IMR-90 (cell line): ENCODE measurements at regions of chr2 and their contacts with region 1.

Region 1: DNA sequence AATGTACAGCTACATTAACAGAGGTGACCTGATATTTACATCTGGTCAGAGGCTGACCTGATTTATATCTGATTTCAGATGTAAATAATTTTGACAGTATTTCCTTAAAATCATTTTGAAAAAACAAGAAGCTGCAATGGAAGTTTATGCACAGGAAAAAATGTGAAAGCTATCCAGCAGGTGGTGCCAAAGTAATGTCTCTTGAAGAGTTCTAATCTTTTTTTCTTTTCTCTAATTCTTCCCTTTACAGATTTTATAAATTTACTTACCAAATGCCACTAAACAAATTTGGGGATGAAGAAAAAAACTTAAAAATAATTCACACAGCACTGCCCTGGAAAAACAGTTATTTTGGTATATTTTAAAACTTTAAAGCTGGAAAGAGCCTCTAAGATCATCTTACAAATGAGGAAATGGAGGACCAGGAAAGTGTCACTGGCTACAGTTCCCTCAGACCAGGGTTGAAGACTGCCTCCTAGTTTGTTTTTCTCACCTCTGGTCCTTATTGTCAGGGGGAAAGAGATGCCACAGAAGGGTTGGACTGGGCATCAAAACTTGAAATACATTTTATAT is 16.4 kb upstream of the FBLN7 start:
- DNase-seq: peak; percentile 66
- ATAC-seq: no peak
- H3K4me3 ChIP-seq: no peak overlapping the region
- H3K27ac ChIP-seq: no peak overlapping the region
- H3K4me1 ChIP-seq: no peaks in the 10 kb centered on the region
- H3K27me3 ChIP-seq: no peaks in the 10 kb centered on the region
- CTCF ChIP-seq: peak; percentile 71
- POLR2A ChIP-seq: no peak
- RAD21 ChIP-seq: peak; percentile 74

Region 2: GRCh38 chr2:111883661-111884591 is 237.8 kb before region 1 on chr2 and contains the start of gene ANAPC1:
- CTCF ChIA-PET with region 1: no interaction called
- POLR2A ChIA-PET with region 1: no interaction called
- dilution Hi-C with region 1: no loop called
- in situ Hi-C with region 1: no loop called
- intact Hi-C with region 1: no loop called
- DNase-seq: peak; percentile 69
- ATAC-seq: peak; percentile 99
- H3K4me3 ChIP-seq: peak within 1 kb of the TSS; percentile 61
- H3K27ac ChIP-seq: peak within 1 kb of the TSS; percentile 60
- H3K4me1 ChIP-seq: no peaks in the 10 kb centered on the region
- H3K27me3 ChIP-seq: no peaks in the 10 kb centered on the region
- CTCF ChIP-seq: no peak
- POLR2A ChIP-seq: peak; percentile 79; the same call in 1 of the 2 replicates
- RAD21 ChIP-seq: no peak
- total RNA-seq, gene ANAPC1: 50.7 and 70.0 TPM in 2 replicates

Region 3: GRCh38 chr2:112242384-112242783 is 120.6 kb after region 1 on chr2:
- CTCF ChIA-PET with region 1: interaction called, 3 read pairs
- POLR2A ChIA-PET with region 1: no interaction called
- dilution Hi-C with region 1: no loop called
- in situ Hi-C with region 1: no loop called
- intact Hi-C with region 1: loop called (anchors 10 kb)
- DNase-seq: no peak
- ATAC-seq: no peak
- H3K4me3 ChIP-seq: no peak overlapping the region
- H3K27ac ChIP-seq: no peak overlapping the region
- H3K4me1 ChIP-seq: no peaks in the 10 kb centered on the region
- H3K27me3 ChIP-seq: no peaks in the 10 kb centered on the region
- CTCF ChIP-seq: no peak
- POLR2A ChIP-seq: no peak
- RAD21 ChIP-seq: no peak

Region 4: DNA sequence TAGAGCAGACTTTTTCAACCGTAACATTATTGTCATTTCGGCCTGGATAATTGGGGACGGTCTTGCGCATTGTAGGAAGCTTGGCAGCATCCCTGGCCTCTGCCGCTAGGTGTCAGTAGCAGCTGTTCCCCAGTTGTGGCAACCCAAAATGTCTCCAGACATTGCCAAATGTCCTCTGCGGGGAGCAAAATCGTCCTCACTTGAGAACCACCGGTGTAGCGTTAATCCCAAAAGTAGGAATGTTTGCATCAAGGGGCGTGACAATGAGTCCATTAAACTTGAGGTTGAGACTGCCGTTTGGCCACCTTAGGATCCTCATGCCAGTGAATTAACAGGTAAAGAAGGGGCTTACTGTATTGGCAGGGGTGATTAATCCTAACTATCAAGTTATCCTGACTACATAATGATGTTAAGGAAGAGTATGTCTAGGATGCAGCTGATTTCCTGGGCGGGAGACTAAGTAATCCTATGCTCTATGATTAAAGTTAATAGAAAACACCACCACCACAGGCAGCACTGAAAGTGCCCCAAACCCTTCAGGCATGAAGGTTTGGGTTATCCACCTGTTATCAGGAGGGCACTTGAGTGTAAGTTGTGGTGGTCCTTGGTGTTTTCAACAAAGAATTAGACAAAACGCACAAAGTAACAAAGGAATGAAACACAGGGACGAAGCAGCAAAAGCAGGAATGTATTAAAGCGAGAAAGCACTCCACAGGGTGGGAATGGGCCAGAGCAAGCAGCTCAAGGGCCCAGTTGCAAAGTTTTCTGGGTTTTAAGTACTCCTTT is 137.9 kb after region 1 on chr2:
- CTCF ChIA-PET with region 1: interaction called, 3 read pairs
- POLR2A ChIA-PET with region 1: no interaction called
- dilution Hi-C with region 1: no loop called
- in situ Hi-C with region 1: no loop called
- intact Hi-C with region 1: loop called (anchors 2 kb)
- DNase-seq: peak; percentile 76
- ATAC-seq: peak; percentile 63
- H3K4me3 ChIP-seq: no peak overlapping the region
- H3K27ac ChIP-seq: no peak overlapping the region
- H3K4me1 ChIP-seq: no peaks in the 10 kb centered on the region
- H3K27me3 ChIP-seq: peaks cover 4% of the 10 kb centered on the region; the same call in 1 of the 2 replicates
- CTCF ChIP-seq: peak; percentile 98
- POLR2A ChIP-seq: no peak
- RAD21 ChIP-seq: peak; percentile 96

Region 5: DNA sequence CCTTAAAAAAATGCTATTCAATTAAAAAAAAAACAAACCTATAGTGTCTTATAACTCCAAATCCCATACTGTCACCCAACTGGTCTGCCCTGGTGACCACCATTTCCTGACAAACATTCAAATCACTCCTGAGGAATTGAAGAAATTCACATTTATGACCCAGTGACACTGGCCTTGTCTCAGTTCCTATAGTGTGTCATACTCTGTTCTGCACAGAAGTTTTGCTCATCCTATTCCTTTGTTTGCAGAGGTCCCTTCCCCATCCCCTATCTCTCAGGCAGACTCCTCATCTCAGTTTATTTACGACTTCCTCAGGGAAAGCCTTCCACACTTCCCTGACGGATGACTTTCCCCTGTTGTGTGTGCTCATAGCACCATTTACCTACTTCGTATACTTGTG is 168.3 kb after region 1 on chr2:
- CTCF ChIA-PET with region 1: no interaction called
- POLR2A ChIA-PET with region 1: no interaction called
- dilution Hi-C with region 1: no loop called
- in situ Hi-C with region 1: no loop called
- intact Hi-C with region 1: no loop called
- DNase-seq: no peak
- ATAC-seq: no peak
- H3K4me3 ChIP-seq: no peak overlapping the region
- H3K27ac ChIP-seq: no peak overlapping the region
- H3K4me1 ChIP-seq: no peaks in the 10 kb centered on the region
- H3K27me3 ChIP-seq: no peaks in the 10 kb centered on the region
- CTCF ChIP-seq: no peak
- POLR2A ChIP-seq: no peak
- RAD21 ChIP-seq: no peak